Activated CD4-positive, alpha-beta T cell treated with anti-CD3 and anti-CD28 coated beads for 36 hours (primary cell): ENCODE measurements at regions of chr17 and their contacts with region 1.

Region 1: GRCh38 chr17:2275722-2276121 is 27.9 kb downstream of the SMG6 start:
- DNase-seq: peak; percentile 13
- ATAC-seq: no peak
- H3K4me3 Mint-ChIP-seq: no peak overlapping the region
- H3K27ac Mint-ChIP-seq: peak overlapping the region; percentile 52
- H3K4me1 Mint-ChIP-seq: peaks cover 56% of the 10 kb centered on the region
- H3K27me3 Mint-ChIP-seq: no peaks in the 10 kb centered on the region

Region 2: GRCh38 chr17:1958134-1958881 is 317.4 kb before region 1 on chr17:
- CTCF ChIA-PET with region 1: no interaction called
- POLR2A ChIA-PET with region 1: no interaction called
- intact Hi-C with region 1: no loop called
- DNase-seq: no peak
- ATAC-seq: no peak
- H3K4me3 Mint-ChIP-seq: no peak overlapping the region
- H3K27ac Mint-ChIP-seq: no peak overlapping the region
- H3K4me1 Mint-ChIP-seq: no peaks in the 10 kb centered on the region
- H3K27me3 Mint-ChIP-seq: no peaks in the 10 kb centered on the region

Region 3: GRCh38 chr17:2192367-2193057 is 83.2 kb before region 1 on chr17:
- CTCF ChIA-PET with region 1: no interaction called
- POLR2A ChIA-PET with region 1: no interaction called
- intact Hi-C with region 1: loop called in 1 of 2 experiments (anchors 5 kb)
- DNase-seq: peak; percentile 69
- ATAC-seq: peak; percentile 57
- H3K4me3 Mint-ChIP-seq: no peak overlapping the region
- H3K27ac Mint-ChIP-seq: peak overlapping the region; percentile 61
- H3K4me1 Mint-ChIP-seq: peaks cover 47% of the 10 kb centered on the region
- H3K27me3 Mint-ChIP-seq: no peaks in the 10 kb centered on the region

Region 4: GRCh38 chr17:2331303-2331702 is 55.6 kb after region 1 on chr17:
- CTCF ChIA-PET with region 1: no interaction called
- POLR2A ChIA-PET with region 1: interaction called, 12 read pairs
- intact Hi-C with region 1: no loop called
- DNase-seq: peak; percentile 22
- ATAC-seq: peak; percentile 23
- H3K4me3 Mint-ChIP-seq: no peak overlapping the region
- H3K27ac Mint-ChIP-seq: peak overlapping the region; percentile 38
- H3K4me1 Mint-ChIP-seq: peaks cover 18% of the 10 kb centered on the region
- H3K27me3 Mint-ChIP-seq: no peaks in the 10 kb centered on the region